ENCODE measurements at regions of chr15 and their contacts with region 1.

Region 1: GRCh38 chr15:43903864-43904290 is 77.1 kb downstream of the WDR76 start:
- DNase-seq: peak; percentile 12 to 69 (median 28)
- ATAC-seq: peak; percentile 61
- H3K4me3 ChIP-seq: no peak overlapping the region
- H3K4me3 Mint-ChIP-seq: no peak overlapping the region
- H3K27ac ChIP-seq: no peak overlapping the region
- H3K27ac Mint-ChIP-seq: no peak overlapping the region
- H3K4me1 ChIP-seq: peaks cover 10% of the 10 kb centered on the region
- H3K4me1 Mint-ChIP-seq: peaks cover 4% of the 10 kb centered on the region
- H3K27me3 ChIP-seq: no peaks in the 10 kb centered on the region
- H3K27me3 Mint-ChIP-seq: no peaks in the 10 kb centered on the region
- CTCF ChIP-seq: peak; percentile 61

Region 2: DNA sequence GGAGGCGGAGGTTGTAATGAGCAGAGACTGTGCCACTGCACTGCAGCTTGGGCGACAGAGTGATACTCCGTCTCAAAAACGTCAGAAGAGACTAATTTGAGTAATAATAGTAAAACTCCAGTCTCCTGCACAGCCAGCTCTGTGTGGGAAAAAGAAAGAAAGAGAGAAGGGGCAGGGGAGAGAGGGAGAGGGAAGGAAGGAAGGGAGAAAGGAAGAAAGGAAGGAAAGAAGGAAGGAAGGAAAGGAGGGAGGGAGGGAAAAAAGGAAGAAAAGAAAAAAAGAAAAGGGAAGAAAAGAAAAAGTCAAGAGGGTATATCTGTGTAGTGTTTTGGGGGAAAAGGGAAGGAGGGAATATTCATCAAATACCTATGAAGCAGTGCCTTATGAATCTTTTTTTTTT is 180.7 kb before region 1 on chr15:
- CTCF ChIA-PET with region 1: no interaction called
- POLR2A ChIA-PET with region 1: no interaction called
- intact Hi-C with region 1: no loop called
- DNase-seq: no peak
- ATAC-seq: no peak
- H3K4me3 ChIP-seq: no peak overlapping the region
- H3K4me3 Mint-ChIP-seq: no peak overlapping the region
- H3K27ac ChIP-seq: no peak overlapping the region
- H3K27ac Mint-ChIP-seq: no peak overlapping the region
- H3K4me1 ChIP-seq: no peaks in the 10 kb centered on the region
- H3K4me1 Mint-ChIP-seq: no peaks in the 10 kb centered on the region
- H3K27me3 ChIP-seq: no peaks in the 10 kb centered on the region
- H3K27me3 Mint-ChIP-seq: no peaks in the 10 kb centered on the region
- CTCF ChIP-seq: no peak

Region 3: DNA sequence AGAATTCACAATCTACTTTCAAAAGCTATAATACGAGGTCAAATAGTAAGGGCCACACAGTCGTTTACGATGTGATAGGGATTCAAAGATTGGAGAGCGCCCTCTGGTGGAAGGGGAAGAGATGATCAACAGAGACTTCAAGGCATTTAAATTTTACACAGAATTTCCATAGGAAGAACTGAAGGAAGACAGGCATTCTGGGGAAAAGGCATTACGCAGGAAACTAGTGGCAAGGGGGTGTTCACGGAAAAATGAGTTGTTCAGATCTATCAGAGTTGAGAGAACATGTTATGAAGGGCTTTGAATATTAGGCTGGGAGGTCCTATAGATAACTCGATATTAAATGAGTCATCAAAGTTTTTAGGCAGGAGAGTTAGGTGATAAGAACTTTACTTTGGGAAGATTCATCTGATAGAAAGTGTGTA is 162.5 kb after region 1 on chr15:
- CTCF ChIA-PET with region 1: interaction called, 3 read pairs
- POLR2A ChIA-PET with region 1: no interaction called
- intact Hi-C with region 1: loop called in 1 of 2 experiments (anchors 10 kb)
- DNase-seq: peak; percentile 2 to 75 (median 30)
- ATAC-seq: no peak
- H3K4me3 ChIP-seq: no peak overlapping the region
- H3K4me3 Mint-ChIP-seq: no peak overlapping the region
- H3K27ac ChIP-seq: no peak overlapping the region
- H3K27ac Mint-ChIP-seq: no peak overlapping the region
- H3K4me1 ChIP-seq: no peaks in the 10 kb centered on the region
- H3K4me1 Mint-ChIP-seq: no peaks in the 10 kb centered on the region
- H3K27me3 ChIP-seq: no peaks in the 10 kb centered on the region
- H3K27me3 Mint-ChIP-seq: peaks cover 21% of the 10 kb centered on the region
- CTCF ChIP-seq: peak; percentile 66

Region 4: GRCh38 chr15:44215594-44215993 is 311.7 kb after region 1 on chr15:
- CTCF ChIA-PET with region 1: no interaction called
- POLR2A ChIA-PET with region 1: no interaction called
- intact Hi-C with region 1: loop called (anchors 1 to 5 kb)
- DNase-seq: no peak
- ATAC-seq: no peak
- H3K4me3 ChIP-seq: no peak overlapping the region
- H3K4me3 Mint-ChIP-seq: no peak overlapping the region
- H3K27ac ChIP-seq: no peak overlapping the region
- H3K27ac Mint-ChIP-seq: no peak overlapping the region
- H3K4me1 ChIP-seq: no peaks in the 10 kb centered on the region
- H3K4me1 Mint-ChIP-seq: no peaks in the 10 kb centered on the region
- H3K27me3 ChIP-seq: peaks cover 2 to 6% of the 10 kb centered on the region in 2 experiments
- H3K27me3 Mint-ChIP-seq: peaks cover 40% of the 10 kb centered on the region
- CTCF ChIP-seq: no peak

Measured in CD4-positive, alpha-beta T cell (primary cell).